Sciatic nerve (tissue), 2 donors: ENCODE measurements at regions of chr4 and their contacts with region 1.

Region 1: DNA sequence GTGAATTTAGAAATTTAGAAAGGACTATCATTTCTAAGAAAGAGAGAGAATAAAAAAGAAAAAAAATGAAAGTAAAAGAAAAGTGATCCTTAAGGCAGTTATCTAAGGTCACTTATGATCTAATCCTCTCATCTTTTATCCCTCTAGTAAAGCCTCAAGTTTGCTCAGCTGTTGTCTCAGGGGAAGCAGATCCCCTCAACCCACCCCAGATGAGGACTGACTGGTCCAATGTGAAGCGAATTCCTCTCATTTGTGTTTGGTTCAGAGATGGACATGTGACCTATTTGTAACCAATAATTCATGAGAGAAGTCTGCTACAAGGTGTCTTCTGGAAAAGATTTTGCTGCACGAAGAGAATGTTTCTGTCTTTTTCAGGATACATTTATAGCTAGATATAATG is 1591.3 kb downstream of the ADGRL3 start:
- DNase-seq: no peak
- ATAC-seq: no peak

Region 2: DNA sequence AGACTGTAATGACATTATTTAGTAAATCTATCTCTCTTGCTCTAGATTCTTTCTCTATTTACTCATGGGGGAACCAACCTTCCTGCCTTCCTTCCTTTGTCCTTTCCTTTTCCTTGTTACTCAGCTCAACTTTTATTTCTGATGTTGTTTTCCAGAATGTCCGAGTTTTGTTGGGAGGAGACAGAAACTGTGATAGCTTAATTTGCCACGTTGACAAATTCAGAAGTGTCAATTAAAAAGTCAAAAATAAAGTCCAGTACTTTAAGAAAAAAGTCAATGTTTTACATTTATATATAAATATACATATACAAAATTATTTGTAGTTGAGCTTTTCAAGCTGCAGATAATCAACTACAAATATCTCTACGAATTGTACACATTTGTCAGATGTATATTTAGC is 403.6 kb before region 1 on chr4:
- intact Hi-C with region 1: no loop called
- DNase-seq: no peak
- ATAC-seq: no peak

Region 3: GRCh38 chr4:62822306-62822705 is 30.9 kb after region 1 on chr4:
- intact Hi-C with region 1: loop called (anchors 2 kb)
- DNase-seq: no peak
- ATAC-seq: no peak

Region 4: DNA sequence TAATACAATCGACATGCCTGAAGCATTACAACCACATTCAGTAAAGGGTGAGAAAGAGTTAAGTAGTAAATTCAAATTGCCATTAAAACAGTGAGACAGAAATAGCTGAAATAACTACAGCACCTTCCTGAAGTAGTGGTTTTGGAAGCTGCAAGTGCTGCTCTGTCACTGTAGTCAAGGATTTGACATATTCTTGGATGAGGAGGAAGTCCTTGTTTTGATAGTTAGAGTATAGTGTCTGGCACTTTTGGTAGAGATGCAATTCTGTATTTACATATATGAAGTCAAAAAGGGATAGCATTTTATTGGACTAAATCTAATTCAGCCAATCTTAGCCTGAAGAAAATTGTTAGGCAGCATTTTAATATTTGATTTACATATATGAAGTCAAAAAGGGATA is 58.3 kb after region 1 on chr4:
- intact Hi-C with region 1: no loop called
- DNase-seq: no peak
- ATAC-seq: no peak

Region 5: DNA sequence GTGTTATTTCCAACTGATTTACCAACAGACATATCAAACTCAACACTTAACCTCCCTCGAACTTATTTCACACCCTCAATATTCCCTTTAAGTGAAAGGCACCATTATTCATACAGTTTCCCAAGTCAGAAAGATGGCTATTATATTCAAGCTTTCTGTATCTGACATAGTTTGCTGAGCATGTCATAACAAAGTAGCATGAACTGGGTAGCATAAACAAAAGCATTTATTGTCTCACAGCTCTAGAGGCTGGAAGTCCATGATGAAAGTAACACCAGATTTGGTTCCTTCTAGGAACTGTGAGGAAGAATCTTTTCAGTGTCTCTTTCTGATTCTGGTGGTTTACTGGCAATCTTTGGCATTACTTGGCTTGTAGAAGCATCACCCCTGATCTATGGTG is 229.3 kb after region 1 on chr4:
- intact Hi-C with region 1: no loop called
- DNase-seq: no peak
- ATAC-seq: no peak